ENCODE measurements at regions of chr2 and their contacts with region 1.

Region 1: GRCh38 chr2:25323042-25323514 is 18.6 kb downstream of the DNMT3A start:
- DNase-seq: no peak
- ATAC-seq: peak; percentile 51
- H3K4me3 Mint-ChIP-seq: peak overlapping the region; percentile 71
- H3K27ac Mint-ChIP-seq: peak overlapping the region; percentile 82
- H3K4me1 Mint-ChIP-seq: peaks cover 29% of the 10 kb centered on the region
- H3K27me3 Mint-ChIP-seq: no peaks in the 10 kb centered on the region

Region 2: DNA sequence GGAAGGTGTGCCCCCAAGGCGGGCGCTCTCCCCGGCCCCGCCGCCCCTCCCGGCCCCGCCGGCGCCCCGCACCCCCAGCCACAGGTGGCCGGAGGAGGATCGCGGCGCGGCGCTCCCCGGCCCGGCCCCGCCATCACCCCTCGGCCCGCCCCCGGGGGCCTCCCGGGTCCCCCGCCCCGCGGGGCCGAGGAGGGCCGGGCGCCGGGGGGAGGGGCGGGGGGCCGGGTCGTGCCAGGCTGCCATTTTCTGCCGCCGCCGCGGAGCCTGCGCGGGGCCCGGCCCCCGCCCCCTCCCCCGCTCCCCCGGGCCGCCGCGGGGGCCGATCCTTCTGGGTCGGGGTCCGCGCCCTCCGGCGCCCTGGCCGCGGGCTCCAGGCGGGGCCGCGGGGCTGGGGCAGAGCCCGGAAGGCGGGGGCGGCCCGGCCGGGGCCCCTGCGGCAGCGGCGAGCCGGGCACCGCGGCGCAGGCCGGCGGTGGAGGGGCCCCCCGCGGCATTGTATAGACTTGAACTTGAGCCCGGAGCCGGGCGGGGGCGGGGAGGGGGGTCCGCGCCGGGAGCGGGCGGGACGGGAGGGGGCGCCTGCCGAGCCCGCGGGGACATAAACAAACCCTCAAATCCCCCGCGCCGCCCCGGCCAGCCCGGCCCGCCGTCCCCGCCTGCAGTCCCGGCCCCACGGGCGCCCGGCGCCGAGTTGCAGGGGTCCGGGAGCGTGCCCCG is 18.1 kb after region 1 on chr2:
- POLR2A ChIA-PET with region 1: interaction called, 10 read pairs
- DNase-seq: peak; percentile 54
- ATAC-seq: no peak
- H3K4me3 Mint-ChIP-seq: no peak overlapping the region
- H3K27ac Mint-ChIP-seq: no peak overlapping the region
- H3K4me1 Mint-ChIP-seq: peaks cover 37% of the 10 kb centered on the region
- H3K27me3 Mint-ChIP-seq: no peaks in the 10 kb centered on the region